Activated T-helper 1 cell treated with anti-CD3 and anti-CD28 coated beads, Interleukin-12 subunit alpha, Interleukin-12 subunit beta, Interleukin-2, Interleukin-4 antibody, amounts not matched to agents 30 ng/mL and 10 ng/mL and 1 ng/mL, durations not matched to agents 14 hours and 24 hours and 36 hours (primary cell): ENCODE measurements at regions of chr15 and their contacts with region 1.

Region 1: DNA sequence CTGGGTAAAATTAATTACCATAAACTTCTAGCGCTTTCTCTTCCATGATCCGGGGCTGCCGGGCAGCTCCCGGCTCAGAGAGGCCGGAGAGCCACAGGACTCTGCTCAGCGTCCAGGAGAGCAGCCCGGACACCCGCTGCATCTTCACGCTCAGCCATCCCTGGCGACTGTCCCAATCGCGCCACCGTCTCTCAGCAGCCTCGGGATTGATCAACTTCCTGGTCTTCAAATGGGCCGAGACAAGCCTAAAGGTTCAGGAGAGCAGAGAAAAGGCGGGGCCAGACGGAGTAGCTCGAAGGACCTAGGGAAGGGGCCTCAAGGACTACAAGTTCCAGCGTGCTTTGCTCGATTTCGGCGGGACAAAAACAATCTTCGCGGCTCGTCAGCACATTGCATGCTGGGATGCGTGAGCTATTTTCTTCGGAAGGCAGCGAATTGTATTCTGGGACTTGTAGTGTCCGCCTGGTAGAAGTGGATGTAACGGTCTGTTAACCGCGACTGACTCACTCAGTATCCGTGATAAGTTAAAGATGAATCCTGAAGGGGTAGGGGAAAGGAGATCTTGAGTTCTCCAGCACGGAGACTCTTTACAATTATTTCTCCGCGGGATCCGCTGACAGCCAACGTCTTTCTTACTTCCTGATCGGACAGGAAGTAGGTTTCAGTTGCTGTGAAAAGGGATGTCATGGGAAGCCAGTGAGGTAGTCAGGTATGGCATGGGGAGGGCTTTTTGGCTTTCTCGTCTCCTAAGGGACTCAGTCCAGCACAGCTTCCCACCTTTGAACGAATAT is at the start of gene CIAO2A:
- DNase-seq: peak; percentile 92
- H3K4me3 Mint-ChIP-seq: peak within 1 kb of the TSS; percentile 96
- H3K27ac Mint-ChIP-seq: peak within 1 kb of the TSS; percentile 92
- H3K4me1 Mint-ChIP-seq: peaks cover 46% of the 10 kb centered on the region
- H3K27me3 Mint-ChIP-seq: no peaks in the 10 kb centered on the region
- total RNA-seq, gene CIAO2A: 70.1 and 87.1 TPM in 2 replicates

Region 2: DNA sequence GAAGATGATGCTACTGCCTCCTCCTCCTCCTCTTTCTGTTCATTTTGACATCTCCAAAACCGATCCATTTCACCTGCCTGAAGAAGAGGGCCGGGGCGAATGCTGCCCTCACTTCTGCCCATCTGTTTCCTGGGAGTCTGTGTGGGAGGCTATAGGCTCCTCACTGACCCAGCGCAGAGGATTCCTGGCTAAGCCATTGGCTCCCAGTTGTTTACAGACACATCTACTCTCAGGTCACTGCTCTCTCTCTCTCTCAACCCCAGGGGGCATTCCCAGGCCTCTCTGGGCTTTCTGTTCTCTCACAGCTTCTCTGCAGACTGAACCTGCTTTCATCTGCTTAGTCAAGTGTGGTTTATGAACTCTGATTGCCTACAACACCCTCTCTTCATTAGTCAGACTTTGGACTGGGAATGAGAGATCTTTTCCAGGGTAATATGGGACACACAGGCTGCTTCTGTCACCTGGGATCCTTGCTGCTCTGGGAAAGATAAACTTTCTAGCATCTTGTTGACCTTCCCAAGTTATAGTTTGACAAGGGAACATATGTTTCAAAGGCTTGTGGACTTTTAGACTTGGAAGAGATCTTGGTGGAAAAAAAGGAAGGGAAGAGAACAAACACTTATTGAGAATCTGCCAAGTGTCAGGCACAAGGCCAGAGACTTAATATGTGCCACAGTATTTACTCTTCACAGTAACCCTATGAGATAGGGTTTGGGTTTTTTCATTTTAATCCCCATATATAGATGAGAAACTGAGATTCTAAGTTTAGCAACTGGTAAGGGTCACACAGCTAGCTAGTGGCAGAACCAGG is 619.6 kb before region 1 on chr15:
- intact Hi-C with region 1: loop called (anchors 10 kb)
- DNase-seq: peak; percentile 52
- H3K4me3 Mint-ChIP-seq: peak overlapping the region; percentile 66
- H3K27ac Mint-ChIP-seq: peak overlapping the region; percentile 95
- H3K4me1 Mint-ChIP-seq: peaks cover 54% of the 10 kb centered on the region
- H3K27me3 Mint-ChIP-seq: peaks cover 1% of the 10 kb centered on the region

Region 3: GRCh38 chr15:63668601-63669000 is 425.2 kb before region 1 on chr15:
- intact Hi-C with region 1: loop called (anchors 2 kb)
- DNase-seq: no peak
- H3K4me3 Mint-ChIP-seq: peak overlapping the region; percentile 68
- H3K27ac Mint-ChIP-seq: peak overlapping the region; percentile 72
- H3K4me1 Mint-ChIP-seq: peaks cover 58% of the 10 kb centered on the region
- H3K27me3 Mint-ChIP-seq: no peaks in the 10 kb centered on the region

Region 4: DNA sequence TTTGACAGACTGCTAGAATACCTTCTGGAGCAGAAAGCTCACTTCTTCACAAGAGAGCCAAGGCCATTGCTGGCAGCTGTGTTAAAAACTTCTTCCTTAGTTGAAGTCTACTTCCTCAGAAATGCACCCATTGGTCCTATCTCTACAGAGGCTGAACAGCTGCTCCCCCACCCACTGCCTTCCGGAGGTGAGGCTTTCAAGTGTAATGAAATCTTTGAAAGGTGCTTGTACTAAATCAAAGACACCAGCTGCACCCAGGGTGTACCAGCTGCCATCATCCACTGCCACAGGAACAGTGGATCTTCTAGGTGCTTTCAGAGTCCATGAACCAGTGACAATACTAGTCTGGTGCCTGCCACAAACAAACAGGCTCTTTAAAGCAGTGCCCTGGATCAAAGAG is 233.7 kb before region 1 on chr15:
- intact Hi-C with region 1: no loop called
- DNase-seq: peak; percentile 44
- H3K4me3 Mint-ChIP-seq: peak overlapping the region; percentile 20
- H3K27ac Mint-ChIP-seq: peak overlapping the region; percentile 64
- H3K4me1 Mint-ChIP-seq: peaks cover 39% of the 10 kb centered on the region
- H3K27me3 Mint-ChIP-seq: no peaks in the 10 kb centered on the region

Region 5: DNA sequence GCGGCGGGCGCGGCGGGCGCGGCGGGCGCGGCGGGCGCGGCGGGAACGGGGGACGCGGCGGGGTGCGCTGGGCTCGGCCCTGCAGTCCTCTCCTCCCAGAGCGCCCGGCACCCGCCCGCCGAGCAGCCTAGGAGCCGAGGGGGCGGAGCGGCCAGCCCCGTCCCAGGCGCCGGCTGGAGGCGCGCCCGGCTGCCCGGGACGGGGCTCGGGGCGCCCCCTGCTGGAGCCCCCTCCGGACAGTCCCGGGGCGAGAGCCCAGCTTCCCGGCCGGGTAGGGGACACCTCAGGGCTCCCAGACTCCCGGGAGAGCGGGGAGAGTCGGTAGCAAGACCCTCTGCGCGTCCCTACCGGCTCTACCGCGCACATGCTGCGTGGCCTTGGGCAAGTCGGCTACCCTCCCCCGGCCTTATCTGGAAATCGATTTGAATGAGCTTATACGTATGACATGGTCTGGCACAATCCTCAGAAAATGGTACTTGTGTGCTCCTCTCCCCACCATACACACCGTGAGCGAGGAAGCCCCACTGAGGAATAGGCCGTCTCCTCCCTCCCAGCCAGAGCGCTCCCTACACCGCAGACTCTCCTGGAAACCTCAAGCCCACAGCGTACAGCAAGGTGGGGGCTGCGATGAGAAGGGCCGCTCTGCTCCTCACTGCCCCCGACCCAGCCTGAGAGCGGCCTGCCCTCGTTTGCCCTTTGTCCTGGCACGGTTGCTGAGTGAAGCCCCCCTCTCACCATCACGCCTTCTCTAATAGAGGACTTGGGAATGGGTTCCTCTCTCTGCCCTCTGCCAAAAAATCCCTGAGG is 47.3 kb before region 1 on chr15 and contains the start of gene DAPK2:
- intact Hi-C with region 1: loop called (anchors 2 kb)
- DNase-seq: peak; percentile 64
- H3K4me3 Mint-ChIP-seq: peak within 1 kb of the TSS; percentile 81
- H3K27ac Mint-ChIP-seq: peak within 1 kb of the TSS; percentile 49
- H3K4me1 Mint-ChIP-seq: peaks cover 36% of the 10 kb centered on the region
- H3K27me3 Mint-ChIP-seq: peaks cover 26% of the 10 kb centered on the region
- total RNA-seq, gene DAPK2: 8.6 and 8.7 TPM in 2 replicates

Region 6: DNA sequence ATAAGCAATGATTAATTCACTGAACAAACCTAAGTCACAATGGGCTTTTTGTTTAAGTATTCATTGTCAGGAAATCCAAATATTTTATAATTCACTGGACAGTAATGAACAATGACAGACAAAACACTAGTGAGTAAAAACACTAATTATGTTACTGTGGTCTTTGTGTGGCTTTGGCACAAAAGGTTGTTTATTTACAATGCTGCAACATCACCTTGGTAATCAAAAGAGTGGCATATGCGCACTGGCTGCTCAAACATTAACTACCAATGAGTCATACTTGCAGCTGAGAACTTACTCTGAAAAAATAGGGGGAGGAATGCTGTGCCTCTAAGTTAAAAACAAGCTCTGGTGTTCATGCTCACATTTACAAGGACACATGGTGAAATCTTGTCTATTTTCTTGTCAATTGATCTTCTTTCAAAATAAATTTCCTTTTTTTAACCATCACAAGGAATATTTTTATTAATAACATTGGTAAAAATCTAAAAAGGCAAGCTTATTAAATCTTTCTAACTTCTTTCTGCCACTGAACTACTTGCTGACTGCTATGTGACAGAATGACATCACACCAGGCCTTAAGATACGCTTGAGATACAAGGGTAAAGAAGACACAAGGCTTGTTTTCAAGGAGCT is 154.2 kb after region 1 on chr15:
- intact Hi-C with region 1: loop called (anchors 10 kb)
- DNase-seq: peak; percentile 27
- H3K4me3 Mint-ChIP-seq: peak overlapping the region; percentile 6
- H3K27ac Mint-ChIP-seq: peak overlapping the region; percentile 76
- H3K4me1 Mint-ChIP-seq: peaks cover 57% of the 10 kb centered on the region
- H3K27me3 Mint-ChIP-seq: peaks cover 2% of the 10 kb centered on the region

Region 7: GRCh38 chr15:64825431-64826294 is 731.8 kb after region 1 on chr15 and contains the start of gene PIF1:
- intact Hi-C with region 1: loop called (anchors 10 kb)
- DNase-seq: peak; percentile 92
- H3K4me3 Mint-ChIP-seq: peak within 1 kb of the TSS; percentile 91
- H3K27ac Mint-ChIP-seq: peak within 1 kb of the TSS; percentile 91
- H3K4me1 Mint-ChIP-seq: peaks cover 40% of the 10 kb centered on the region
- H3K27me3 Mint-ChIP-seq: no peaks in the 10 kb centered on the region
- total RNA-seq, gene PIF1: 19.1 and 23.9 TPM in 2 replicates